Activated naive CD4-positive, alpha-beta T cell treated with anti-CD3 and anti-CD28 coated beads for 36 hours (primary cell): ENCODE measurements at regions of chr5 and their contacts with region 1.

Region 1: GRCh38 chr5:55172051-55172899 is 702 bp downstream of the CDC20B start:
- DNase-seq: peak; percentile 79
- H3K4me3 Mint-ChIP-seq: peak overlapping the region; percentile 81
- H3K27ac Mint-ChIP-seq: no peak overlapping the region
- H3K4me1 Mint-ChIP-seq: peaks cover 36% of the 10 kb centered on the region
- H3K27me3 Mint-ChIP-seq: peaks cover 48% of the 10 kb centered on the region

Region 2: GRCh38 chr5:55037046-55037771 is 135.1 kb before region 1 on chr5:
- CTCF ChIA-PET with region 1: no interaction called
- intact Hi-C with region 1: loop called (anchors 1 kb)
- DNase-seq: peak; percentile 92
- H3K4me3 Mint-ChIP-seq: no peak overlapping the region
- H3K27ac Mint-ChIP-seq: peak overlapping the region; percentile 83
- H3K4me1 Mint-ChIP-seq: peaks cover 20% of the 10 kb centered on the region
- H3K27me3 Mint-ChIP-seq: no peaks in the 10 kb centered on the region

Region 3: GRCh38 chr5:55226027-55226933 is 54.0 kb after region 1 on chr5:
- CTCF ChIA-PET with region 1: interaction called, 10 read pairs
- intact Hi-C with region 1: loop called (anchors 1 kb)
- DNase-seq: peak; percentile 85
- H3K4me3 Mint-ChIP-seq: peak overlapping the region; percentile 65
- H3K27ac Mint-ChIP-seq: no peak overlapping the region
- H3K4me1 Mint-ChIP-seq: peaks cover 44% of the 10 kb centered on the region
- H3K27me3 Mint-ChIP-seq: peaks cover 86% of the 10 kb centered on the region

Region 4: DNA sequence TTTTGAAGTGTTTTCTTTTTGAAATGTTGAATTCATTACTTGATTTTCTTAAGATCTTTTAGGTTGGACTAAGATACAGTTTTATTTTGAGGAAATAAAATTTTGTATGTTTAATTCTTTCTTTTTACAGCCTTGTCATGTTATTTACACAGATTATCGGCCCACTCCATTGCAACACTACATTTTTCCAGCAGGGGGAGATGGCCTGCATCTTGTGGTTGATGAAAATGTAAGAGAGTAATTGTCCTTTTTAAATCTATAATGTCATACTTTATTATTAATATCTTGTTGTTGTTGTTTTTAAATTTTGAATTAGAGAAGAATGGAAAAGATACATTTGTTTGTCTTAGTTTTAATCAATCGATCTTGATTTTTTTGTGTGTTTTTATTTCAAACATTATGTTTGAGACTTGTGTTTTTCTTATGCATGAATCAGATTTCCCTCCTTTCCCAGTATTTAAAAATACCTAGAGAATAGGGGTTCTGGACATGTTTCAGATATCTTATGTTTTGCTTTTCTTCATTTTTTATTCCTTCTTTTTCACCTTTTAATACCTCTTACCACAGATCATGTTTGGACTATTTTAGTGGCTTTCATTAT is 172.2 kb after region 1 on chr5:
- CTCF ChIA-PET with region 1: interaction called, 3 read pairs
- intact Hi-C with region 1: loop called (anchors 1 kb)
- DNase-seq: peak; percentile 84
- H3K4me3 Mint-ChIP-seq: no peak overlapping the region
- H3K27ac Mint-ChIP-seq: no peak overlapping the region
- H3K4me1 Mint-ChIP-seq: peaks cover 7% of the 10 kb centered on the region
- H3K27me3 Mint-ChIP-seq: no peaks in the 10 kb centered on the region

Region 5: GRCh38 chr5:55440188-55440646 is 267.9 kb after region 1 on chr5:
- CTCF ChIA-PET with region 1: no interaction called
- intact Hi-C with region 1: loop called (anchors 2 kb)
- DNase-seq: peak; percentile 29
- H3K4me3 Mint-ChIP-seq: no peak overlapping the region
- H3K27ac Mint-ChIP-seq: no peak overlapping the region
- H3K4me1 Mint-ChIP-seq: peaks cover 44% of the 10 kb centered on the region
- H3K27me3 Mint-ChIP-seq: no peaks in the 10 kb centered on the region

Region 6: GRCh38 chr5:55711968-55712859 is 539.9 kb after region 1 on chr5 and contains the start of gene SLC38A9:
- CTCF ChIA-PET with region 1: no interaction called
- intact Hi-C with region 1: loop called (anchors 5 kb)
- DNase-seq: peak; percentile 97
- H3K4me3 Mint-ChIP-seq: peak within 1 kb of the TSS; percentile 92
- H3K27ac Mint-ChIP-seq: peak within 1 kb of the TSS; percentile 62
- H3K4me1 Mint-ChIP-seq: peaks cover 23% of the 10 kb centered on the region
- H3K27me3 Mint-ChIP-seq: no peaks in the 10 kb centered on the region
- total RNA-seq, gene SLC38A9: 9.2 to 10.1 TPM

Region 7: DNA sequence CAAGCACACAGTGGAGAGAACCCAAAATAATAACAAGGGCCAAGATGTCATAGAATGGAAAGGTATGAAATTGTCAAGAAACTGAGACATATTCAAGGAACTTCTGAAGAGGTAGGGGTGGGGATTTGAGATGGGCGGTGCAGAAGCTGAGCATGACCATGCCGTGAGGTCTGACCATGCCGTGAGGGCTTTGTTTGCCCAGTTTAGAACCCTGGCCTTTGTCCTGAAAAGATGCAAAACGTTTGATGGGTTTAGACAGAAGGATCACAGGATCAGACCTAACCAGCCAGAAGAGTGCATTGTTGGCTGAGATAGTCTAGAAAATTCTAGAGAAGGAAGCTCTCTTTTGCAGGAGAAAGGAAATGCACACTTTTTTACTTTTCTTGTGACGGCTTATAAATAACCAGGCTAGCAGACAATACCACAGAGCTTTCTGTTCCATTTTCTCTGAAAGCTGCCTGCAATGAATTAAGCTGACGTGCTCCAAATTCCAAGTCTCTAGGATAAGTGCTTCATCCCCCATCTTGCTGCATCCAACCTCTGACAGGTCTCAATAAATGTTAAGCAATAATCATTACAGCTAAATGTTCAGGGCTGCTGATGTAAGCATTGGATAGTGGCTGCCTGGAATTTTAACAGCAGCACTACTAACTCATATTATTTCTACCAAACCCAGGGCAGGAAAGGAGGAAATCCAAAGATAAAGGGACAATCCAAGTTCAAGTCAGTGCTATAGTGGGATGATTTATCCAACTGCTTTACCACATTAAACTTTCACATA is 933.4 kb after region 1 on chr5:
- CTCF ChIA-PET with region 1: no interaction called
- intact Hi-C with region 1: loop called (anchors 10 kb)
- DNase-seq: no peak
- H3K4me3 Mint-ChIP-seq: peak overlapping the region; percentile 58
- H3K27ac Mint-ChIP-seq: peak overlapping the region; percentile 91
- H3K4me1 Mint-ChIP-seq: peaks cover 76% of the 10 kb centered on the region
- H3K27me3 Mint-ChIP-seq: no peaks in the 10 kb centered on the region